ENCODE measurements at regions of chr16 and their contacts with region 1.

Region 1: GRCh38 chr16:10828851-10829731 is 10.5 kb upstream of the TVP23A start:
- H3K4me3 Mint-ChIP-seq: peak overlapping the region; percentile 55
- H3K27ac Mint-ChIP-seq: peak overlapping the region; percentile 99
- H3K4me1 Mint-ChIP-seq: peaks cover 82% of the 10 kb centered on the region
- H3K27me3 Mint-ChIP-seq: no peaks in the 10 kb centered on the region

Region 2: GRCh38 chr16:10752843-10753523 is 76.1 kb before region 1 on chr16:
- intact Hi-C with region 1: loop called (anchors 5 kb)
- H3K4me3 Mint-ChIP-seq: peak overlapping the region; percentile 58
- H3K27ac Mint-ChIP-seq: peak overlapping the region; percentile 96
- H3K4me1 Mint-ChIP-seq: peaks cover 96% of the 10 kb centered on the region
- H3K27me3 Mint-ChIP-seq: no peaks in the 10 kb centered on the region

Region 3: GRCh38 chr16:10806698-10807097 is 22.4 kb before region 1 on chr16:
- intact Hi-C with region 1: loop called (anchors 2 kb)
- H3K4me3 Mint-ChIP-seq: peak overlapping the region; percentile 54
- H3K27ac Mint-ChIP-seq: peak overlapping the region; percentile 89
- H3K4me1 Mint-ChIP-seq: peaks cover 87% of the 10 kb centered on the region
- H3K27me3 Mint-ChIP-seq: no peaks in the 10 kb centered on the region

Region 4: GRCh38 chr16:10846213-10846998 is 17.3 kb after region 1 on chr16:
- intact Hi-C with region 1: loop called (anchors 2 kb)
- H3K4me3 Mint-ChIP-seq: peak overlapping the region; percentile 75
- H3K27ac Mint-ChIP-seq: peak overlapping the region; percentile 99
- H3K4me1 Mint-ChIP-seq: peaks cover 77% of the 10 kb centered on the region
- H3K27me3 Mint-ChIP-seq: no peaks in the 10 kb centered on the region

Region 5: DNA sequence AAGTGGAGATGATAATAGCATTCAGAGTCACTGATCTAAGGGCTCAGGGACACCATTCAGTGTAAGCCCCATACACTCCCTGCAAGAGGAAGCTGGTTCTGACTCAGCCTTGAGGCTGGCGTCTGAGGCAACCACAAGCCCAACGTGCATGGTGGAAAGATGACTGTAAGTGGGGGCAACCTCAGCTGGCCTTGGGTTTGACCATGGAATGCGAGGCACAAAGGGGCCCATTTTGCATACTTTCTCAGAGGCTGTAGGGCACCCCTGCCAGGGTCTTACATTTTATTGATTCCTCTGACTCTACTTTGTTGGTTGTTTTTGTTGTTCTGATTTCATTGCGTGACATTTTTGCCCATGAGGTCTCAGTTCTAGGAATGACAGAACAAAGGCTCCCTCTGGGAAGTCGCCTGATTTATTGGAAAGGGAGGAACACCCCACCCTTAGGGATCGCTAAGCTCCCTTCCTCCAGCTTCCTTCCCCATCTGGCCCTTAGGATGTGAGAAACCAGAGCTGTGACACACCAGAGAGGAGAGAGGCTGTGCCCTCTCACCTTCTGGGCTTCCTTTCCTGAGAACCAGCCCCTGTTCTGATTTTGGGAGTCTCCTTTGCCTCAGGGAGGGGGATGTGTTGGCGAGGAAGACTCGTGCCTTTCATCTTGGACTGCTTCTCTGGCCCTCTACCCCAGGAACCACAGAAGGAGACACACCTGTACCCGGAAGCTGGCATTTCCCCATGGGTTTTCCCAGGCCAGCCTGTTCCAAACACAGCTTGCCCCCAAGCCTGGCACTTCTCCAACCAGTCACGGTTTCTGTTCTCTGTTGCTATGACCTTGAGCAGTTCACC is 42.3 kb after region 1 on chr16:
- intact Hi-C with region 1: loop called (anchors 2 kb)
- H3K4me3 Mint-ChIP-seq: peak overlapping the region; percentile 85
- H3K27ac Mint-ChIP-seq: peak overlapping the region; percentile 92
- H3K4me1 Mint-ChIP-seq: peaks cover 91% of the 10 kb centered on the region
- H3K27me3 Mint-ChIP-seq: no peaks in the 10 kb centered on the region

Measured in dendritic cell treated with granulocyte-macrophage colony-stimulating factor and Interleukin-4, amounts not matched to agents 40 ng/mL and 50 ng/mL, for 4 days (primary cell).